Naive thymus-derived CD4-positive, alpha-beta T cell (primary cell): ENCODE measurements at regions of chr14 and their contacts with region 1.

Region 1: GRCh38 chr14:37594238-37594914 is 673 bp downstream of the FOXA1 start:
- DNase-seq: no peak
- ATAC-seq: no peak
- H3K4me3 ChIP-seq: no peak overlapping the region
- H3K4me3 Mint-ChIP-seq: peak overlapping the region; percentile 54 to 82 (median 70)
- H3K27ac ChIP-seq: no peak overlapping the region
- H3K27ac Mint-ChIP-seq: peak overlapping the region in 2 of 9 donors; percentile 4 to 72
- H3K4me1 ChIP-seq: no peaks in the 10 kb centered on the region
- H3K4me1 Mint-ChIP-seq: peaks cover 7 to 42% (median 26%) of the 10 kb centered on the region in 7 donors
- H3K27me3 ChIP-seq: peaks cover 4 to 21% of the 10 kb centered on the region in 2 donors
- H3K27me3 Mint-ChIP-seq: peaks cover 72 to 81% (median 77%) of the 10 kb centered on the region in 5 donors

Region 2: GRCh38 chr14:36661756-36662498 is 932.4 kb before region 1 on chr14 and contains the start of gene PAX9:
- CTCF ChIA-PET with region 1: no interaction called
- POLR2A ChIA-PET with region 1: no interaction called
- intact Hi-C with region 1: loop called in 1 of 2 experiments (anchors 5 kb)
- DNase-seq: peak in 2 of 9 donors; percentile 9 to 10
- ATAC-seq: peak; percentile 59
- H3K4me3 ChIP-seq: no peak within 1 kb of the TSS
- H3K4me3 Mint-ChIP-seq: peak within 1 kb of the TSS; percentile 39 to 77 (median 66)
- H3K27ac ChIP-seq: no peak within 1 kb of the TSS
- H3K27ac Mint-ChIP-seq: peak within 1 kb of the TSS in 1 of 9 donors; percentile 77
- H3K4me1 ChIP-seq: peaks cover 0 to 13% of the 10 kb centered on the region in 2 donors
- H3K4me1 Mint-ChIP-seq: peaks cover 14 to 64% (median 54%) of the 10 kb centered on the region in 7 donors
- H3K27me3 ChIP-seq: peaks cover 7 to 11% of the 10 kb centered on the region in 2 donors
- H3K27me3 Mint-ChIP-seq: peaks cover 75 to 97% (median 85%) of the 10 kb centered on the region in 5 donors
- total RNA-seq, gene PAX9: not detected

Region 3: DNA sequence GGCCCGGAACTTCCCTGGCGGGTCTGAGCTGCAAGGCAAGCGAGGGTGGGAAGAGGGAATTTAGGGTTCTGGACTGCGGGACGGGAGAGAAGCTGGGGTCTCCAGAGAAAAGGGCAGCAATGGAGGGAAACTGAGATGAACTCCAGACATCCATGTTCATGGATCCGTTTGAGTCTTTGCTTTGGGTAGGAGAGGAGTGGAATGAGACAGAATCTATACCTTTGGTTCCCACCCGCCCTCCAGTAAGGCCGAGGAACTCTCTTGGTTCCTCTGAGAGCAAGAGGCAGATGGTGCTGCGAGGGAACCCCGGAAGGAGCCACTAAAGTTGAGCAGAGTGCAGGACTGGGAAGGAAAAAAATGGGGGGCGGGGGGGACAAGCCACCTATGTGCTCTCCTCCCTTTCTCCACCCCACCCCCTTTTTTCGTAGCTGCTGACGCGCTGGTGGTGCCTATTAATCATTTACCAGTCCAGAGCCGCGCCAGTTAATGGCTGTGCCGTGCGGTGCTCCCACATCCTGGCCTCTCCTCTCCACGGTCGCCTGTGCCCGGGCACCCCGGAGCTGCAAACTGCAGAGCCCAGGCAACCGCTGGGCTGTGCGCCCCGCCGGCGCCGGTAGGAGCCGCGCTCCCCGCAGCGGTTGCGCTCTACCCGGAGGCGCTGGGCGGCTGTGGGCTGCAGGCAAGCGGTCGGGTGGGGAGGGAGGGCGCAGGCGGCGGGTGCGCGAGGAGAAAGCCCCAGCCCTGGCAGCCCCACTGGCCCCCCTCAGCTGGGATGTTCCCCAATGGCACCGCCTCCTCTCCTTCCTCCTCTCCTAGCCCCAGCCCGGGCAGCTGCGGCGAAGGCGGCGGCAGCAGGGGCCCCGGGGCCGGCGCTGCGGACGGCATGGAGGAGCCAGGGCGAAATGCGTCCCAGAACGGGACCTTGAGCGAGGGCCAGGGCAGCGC is 614.5 kb after region 1 on chr14:
- CTCF ChIA-PET with region 1: no interaction called
- POLR2A ChIA-PET with region 1: no interaction called
- intact Hi-C with region 1: loop called in 1 of 2 experiments (anchors 5 kb)
- DNase-seq: no peak
- ATAC-seq: peak; percentile 54
- H3K4me3 ChIP-seq: peak overlapping the region; percentile 21
- H3K4me3 Mint-ChIP-seq: peak overlapping the region in 9 of 10 donors; percentile 21 to 87 (median 76)
- H3K27ac ChIP-seq: no peak overlapping the region
- H3K27ac Mint-ChIP-seq: peak overlapping the region in 1 of 9 donors; percentile 19
- H3K4me1 ChIP-seq: peaks cover 0 to 6% of the 10 kb centered on the region in 2 donors
- H3K4me1 Mint-ChIP-seq: peaks cover 3 to 42% (median 34%) of the 10 kb centered on the region in 7 donors
- H3K27me3 ChIP-seq: peaks cover 3 to 7% of the 10 kb centered on the region in 2 donors
- H3K27me3 Mint-ChIP-seq: peaks cover 56 to 71% (median 65%) of the 10 kb centered on the region in 5 donors

Region 4: DNA sequence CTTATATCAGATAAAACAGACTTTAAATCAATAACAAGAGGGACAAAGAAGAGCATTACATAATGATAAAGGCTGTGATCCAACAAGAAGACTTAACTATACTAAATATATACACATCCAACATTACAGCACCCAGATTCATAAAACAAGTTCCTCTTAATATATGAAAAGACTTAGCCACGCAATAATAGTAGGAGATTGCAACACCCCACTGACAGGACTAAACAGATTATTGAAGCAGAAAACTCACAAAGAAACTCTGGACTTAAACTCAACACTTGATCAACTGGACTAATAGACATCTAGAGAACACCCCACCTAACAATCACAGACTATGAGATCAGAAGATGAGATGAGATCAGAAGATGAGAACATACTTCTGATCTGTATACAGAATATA is 667.2 kb after region 1 on chr14:
- CTCF ChIA-PET with region 1: no interaction called
- POLR2A ChIA-PET with region 1: no interaction called
- intact Hi-C with region 1: no loop called
- DNase-seq: no peak
- ATAC-seq: no peak
- H3K4me3 ChIP-seq: no peak overlapping the region
- H3K4me3 Mint-ChIP-seq: no peak overlapping the region
- H3K27ac ChIP-seq: no peak overlapping the region
- H3K27ac Mint-ChIP-seq: no peak overlapping the region
- H3K4me1 ChIP-seq: no peaks in the 10 kb centered on the region
- H3K4me1 Mint-ChIP-seq: peaks cover 0 to 2% (median 1%) of the 10 kb centered on the region in 7 donors
- H3K27me3 ChIP-seq: peaks cover 0 to 8% of the 10 kb centered on the region in 2 donors
- H3K27me3 Mint-ChIP-seq: peaks cover 13 to 39% (median 31%) of the 10 kb centered on the region in 5 donors